Esophagus squamous epithelium (tissue), 5 donors: ENCODE measurements at regions of chr15 and their contacts with region 1.

Region 1: GRCh38 chr15:94582369-94582768 is 351.0 kb downstream of the MCTP2 start:
- DNase-seq: no peak
- H3K4me3 ChIP-seq: no peak overlapping the region
- H3K27ac ChIP-seq: no peak overlapping the region
- H3K4me1 ChIP-seq: no peaks in the 10 kb centered on the region
- H3K27me3 ChIP-seq: no peaks in the 10 kb centered on the region
- CTCF ChIP-seq: peak in 3 of 6 experiments; percentile 7 to 30 (median 24)
- POLR2A ChIP-seq: no peak

Region 2: DNA sequence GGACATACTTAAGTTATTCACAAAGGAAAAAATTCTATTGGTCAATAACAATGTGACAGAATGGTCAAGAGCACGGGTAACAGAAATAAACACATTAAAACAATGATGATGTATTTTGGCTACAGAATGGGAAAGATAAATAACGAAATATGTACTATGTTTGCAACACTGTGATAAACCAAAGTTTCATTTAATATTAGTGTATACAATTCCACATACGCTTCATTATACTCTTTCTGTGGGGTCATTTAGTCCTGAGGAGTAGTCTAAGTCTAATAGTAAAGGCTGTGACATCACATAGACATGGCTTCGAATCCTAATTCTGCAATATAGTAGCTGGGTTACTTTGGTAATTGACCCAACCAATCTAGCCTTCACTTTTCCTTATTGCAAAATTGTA is 57.3 kb after region 1 on chr15:
- intact Hi-C with region 1: loop called (anchors 10 kb)
- DNase-seq: no peak
- H3K4me3 ChIP-seq: no peak overlapping the region
- H3K27ac ChIP-seq: no peak overlapping the region
- H3K4me1 ChIP-seq: no peaks in the 10 kb centered on the region
- H3K27me3 ChIP-seq: no peaks in the 10 kb centered on the region
- CTCF ChIP-seq: no peak
- POLR2A ChIP-seq: no peak

Region 3: DNA sequence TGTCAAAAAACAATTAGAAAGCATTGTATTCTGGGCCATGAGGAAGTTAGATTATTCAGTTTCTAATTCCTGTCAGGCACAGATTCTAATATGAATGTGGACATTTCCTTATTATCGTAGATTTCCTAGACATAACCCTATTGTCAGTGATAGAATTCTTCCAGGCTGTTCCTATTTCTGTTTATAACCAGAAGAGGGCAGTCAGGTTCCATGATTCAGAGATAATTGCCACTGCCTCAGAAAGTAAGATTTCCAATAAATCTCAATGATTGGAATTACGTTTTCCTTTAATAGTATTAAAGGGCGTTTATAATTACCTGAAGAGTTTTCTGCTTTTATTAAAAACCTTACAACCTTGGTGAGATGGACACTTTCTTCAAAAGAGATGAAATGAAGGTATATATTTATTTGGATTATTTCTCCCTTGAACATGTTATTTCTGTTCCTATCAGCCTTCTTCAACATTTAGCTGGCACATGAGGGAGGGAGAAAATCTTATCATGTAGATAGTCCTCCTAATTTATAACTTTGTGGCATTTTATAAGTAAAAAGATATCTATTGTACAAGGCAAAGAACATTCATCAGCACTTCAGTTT is 88.2 kb after region 1 on chr15:
- intact Hi-C with region 1: no loop called
- DNase-seq: no peak
- H3K4me3 ChIP-seq: no peak overlapping the region
- H3K27ac ChIP-seq: peak overlapping the region in 2 of 4 donors; percentile 60 to 68
- H3K4me1 ChIP-seq: peaks cover 0 to 35% (median 13%) of the 10 kb centered on the region in 3 donors
- H3K27me3 ChIP-seq: peaks cover 0 to 19% (median 0%) of the 10 kb centered on the region in 4 donors
- CTCF ChIP-seq: peak; percentile 43 to 78 (median 65)
- POLR2A ChIP-seq: no peak